HCT116 (cell line): ENCODE measurements at regions of chr9 and their contacts with region 1.

Region 1: GRCh38 chr9:85871008-85871407 is 69.9 kb upstream of the NAA35 start:
- DNase-seq: no peak
- ATAC-seq: no peak
- H3K4me3 ChIP-seq: no peak overlapping the region
- H3K27ac ChIP-seq: no peak overlapping the region
- H3K4me1 ChIP-seq: no peaks in the 10 kb centered on the region
- H3K27me3 ChIP-seq: no peaks in the 10 kb centered on the region
- CTCF ChIP-seq: no peak
- POLR2A ChIP-seq: no peak
- RAD21 ChIP-seq: no peak

Region 2: GRCh38 chr9:85909390-85909789 is 38.4 kb after region 1 on chr9:
- CTCF ChIA-PET with region 1: no interaction called
- POLR2A ChIA-PET with region 1: no interaction called
- RAD21 ChIA-PET with region 1: no interaction called
- intact Hi-C with region 1: loop called (anchors 5 kb)
- DNase-seq: no peak
- ATAC-seq: no peak
- H3K4me3 ChIP-seq: no peak overlapping the region
- H3K27ac ChIP-seq: no peak overlapping the region
- H3K4me1 ChIP-seq: no peaks in the 10 kb centered on the region
- H3K27me3 ChIP-seq: no peaks in the 10 kb centered on the region
- CTCF ChIP-seq: no peak
- POLR2A ChIP-seq: no peak
- RAD21 ChIP-seq: no peak

Region 3: DNA sequence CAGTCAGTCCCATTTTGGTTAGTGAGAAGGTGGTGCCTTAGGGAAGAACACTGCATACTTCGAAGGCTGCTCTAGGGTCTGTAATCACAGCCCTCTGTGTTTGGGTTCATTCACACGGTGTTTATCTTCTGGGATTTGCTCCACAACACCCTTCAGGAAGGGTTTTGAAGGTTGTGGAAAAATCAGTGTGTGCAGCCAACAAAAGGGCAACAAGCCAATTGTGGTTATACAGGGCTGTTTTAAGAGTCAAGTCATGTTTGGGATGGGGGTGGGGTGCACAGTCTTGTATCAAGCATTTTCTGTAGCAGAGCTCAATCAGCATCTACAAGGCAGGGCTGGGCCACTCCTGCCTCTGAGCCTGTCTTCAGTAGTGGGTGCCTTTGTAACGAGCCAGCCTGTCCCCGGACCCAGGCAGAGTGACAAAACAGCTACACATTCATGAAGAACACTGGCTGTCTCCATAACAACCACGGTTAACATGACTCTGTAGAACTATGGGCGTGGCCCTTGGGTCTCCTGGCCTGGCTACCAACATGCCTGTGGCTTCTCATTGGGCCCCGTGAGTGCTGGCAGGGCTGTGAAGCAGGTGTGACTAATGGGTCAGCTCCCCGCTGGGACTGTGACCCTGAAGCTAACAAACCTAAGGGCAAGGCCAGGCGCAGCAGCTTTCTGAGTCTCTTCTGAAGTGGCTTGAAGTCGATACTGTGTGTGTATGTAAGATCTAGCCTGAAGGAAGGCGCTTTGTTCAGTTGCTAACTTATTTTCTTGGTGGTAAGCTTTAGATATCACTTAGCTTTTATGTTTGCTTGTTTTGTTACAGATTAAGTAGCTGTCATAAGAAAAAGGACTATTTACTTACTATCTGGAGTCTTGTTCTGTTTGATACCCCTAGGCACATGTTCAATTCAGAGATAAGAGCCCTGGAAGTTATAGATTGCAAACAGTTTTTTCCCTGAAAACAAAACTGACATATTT is 256.3 kb after region 1 on chr9:
- CTCF ChIA-PET with region 1: no interaction called
- POLR2A ChIA-PET with region 1: no interaction called
- RAD21 ChIA-PET with region 1: no interaction called
- intact Hi-C with region 1: no loop called
- DNase-seq: peak; percentile 96
- ATAC-seq: peak; percentile 98
- H3K4me3 ChIP-seq: peak overlapping the region in 1 of 2 experiments; percentile 39; a peak in 2 of 4 replicates
- H3K27ac ChIP-seq: peak overlapping the region; percentile 31
- H3K4me1 ChIP-seq: peaks cover 24 to 27% of the 10 kb centered on the region in 2 experiments
- H3K27me3 ChIP-seq: no peaks in the 10 kb centered on the region
- CTCF ChIP-seq: no peak
- POLR2A ChIP-seq: no peak
- RAD21 ChIP-seq: peak; percentile 13; the same call in 1 of the 2 replicates